Heart left ventricle (tissue), 16 donors: ENCODE measurements at regions of chr13 and their contacts with region 1.

Region 1: GRCh38 chr13:111066544-111066943 is 48.6 kb upstream of the ARHGEF7 start:
- DNase-seq: peak in 2 of 5 donors; percentile 49 to 61
- ATAC-seq: peak; percentile 37 to 68 (median 58)
- H3K4me3 ChIP-seq: peak overlapping the region in 8 of 12 donors; percentile 57 to 78 (median 67)
- H3K27ac ChIP-seq: peak overlapping the region in 8 of 12 donors; percentile 1 to 67 (median 64)
- H3K4me1 ChIP-seq: peaks cover 0 to 13% (median 0%) of the 10 kb centered on the region in 12 donors
- H3K27me3 ChIP-seq: peaks cover 0 to 28% (median 0%) of the 10 kb centered on the region in 9 donors
- CTCF ChIP-seq: no peak
- POLR2A ChIP-seq: no peak

Region 2: GRCh38 chr13:111114362-111115060 is 48.0 kb after region 1 on chr13:
- intact Hi-C with region 1: loop called in 1 of 10 experiments (anchors 5 kb)
- DNase-seq: peak; percentile 46 to 79 (median 61)
- ATAC-seq: peak in 3 of 4 donors; percentile 69 to 78 (median 70)
- H3K4me3 ChIP-seq: peak overlapping the region; percentile 39 to 78 (median 64)
- H3K27ac ChIP-seq: peak overlapping the region; percentile 20 to 88 (median 78)
- H3K4me1 ChIP-seq: peaks cover 0 to 22% (median 9%) of the 10 kb centered on the region in 12 donors
- H3K27me3 ChIP-seq: peaks cover 0 to 68% (median 5%) of the 10 kb centered on the region in 9 donors
- CTCF ChIP-seq: no peak
- POLR2A ChIP-seq: no peak

Region 3: DNA sequence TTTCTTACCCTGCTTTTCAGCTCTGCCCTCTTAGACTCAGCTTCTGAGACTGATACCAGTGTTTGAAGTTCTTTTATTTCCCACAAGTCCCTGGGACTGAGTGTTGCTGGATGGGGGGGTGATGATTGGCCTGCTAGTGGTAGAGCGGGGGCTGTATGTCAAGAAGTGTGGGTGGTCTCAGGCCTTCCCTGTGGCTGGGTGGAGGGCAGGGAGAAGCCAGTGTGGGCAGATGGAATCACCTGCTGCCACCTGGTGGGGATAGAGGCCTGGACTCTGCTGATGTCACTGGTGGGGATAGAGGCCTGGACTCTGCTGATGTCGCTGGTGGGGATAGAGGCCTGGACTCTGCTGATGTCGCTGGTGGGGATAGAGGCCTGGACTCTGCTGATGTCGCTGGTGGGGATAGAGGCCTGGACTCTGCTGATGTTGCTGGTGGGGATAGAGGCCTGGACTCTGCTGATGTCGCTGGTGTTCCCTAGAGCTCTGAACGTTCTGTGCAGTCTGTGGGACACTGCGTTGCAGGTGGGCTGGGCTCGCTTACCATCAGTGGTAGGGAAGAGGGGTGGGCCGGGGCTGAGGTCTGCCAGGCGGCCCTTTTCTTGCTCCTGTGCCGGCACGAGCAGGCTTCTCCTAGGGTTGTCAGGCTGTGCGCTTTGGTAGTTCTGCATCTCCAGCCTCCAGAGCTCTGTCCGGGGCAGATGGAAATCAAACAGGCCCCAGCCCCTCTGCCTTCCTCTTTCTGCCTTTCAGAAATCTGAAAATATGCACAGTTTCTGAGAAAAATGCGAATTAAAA is 149.8 kb after region 1 on chr13:
- intact Hi-C with region 1: loop called in 9 of 10 experiments (anchors 5 kb)
- DNase-seq: peak in 1 of 5 donors; percentile 37
- ATAC-seq: peak; percentile 40 to 61 (median 43)
- H3K4me3 ChIP-seq: no peak overlapping the region
- H3K27ac ChIP-seq: peak overlapping the region in 9 of 12 donors; percentile 8 to 65 (median 22)
- H3K4me1 ChIP-seq: peaks cover 0 to 92% (median 73%) of the 10 kb centered on the region in 12 donors
- H3K27me3 ChIP-seq: no peaks in the 10 kb centered on the region
- CTCF ChIP-seq: peak in 11 of 12 donors; percentile 19 to 57 (median 42)
- POLR2A ChIP-seq: no peak

Region 4: GRCh38 chr13:111281751-111282311 is 215.3 kb after region 1 on chr13:
- intact Hi-C with region 1: loop called in 1 of 10 experiments (anchors 10 kb)
- DNase-seq: peak in 2 of 5 donors; percentile 46 to 54
- ATAC-seq: peak; percentile 25 to 58 (median 41)
- H3K4me3 ChIP-seq: peak overlapping the region in 1 of 12 donors; percentile 9
- H3K27ac ChIP-seq: peak overlapping the region; percentile 43 to 83 (median 72)
- H3K4me1 ChIP-seq: peaks cover 11 to 57% (median 40%) of the 10 kb centered on the region in 12 donors
- H3K27me3 ChIP-seq: no peaks in the 10 kb centered on the region
- CTCF ChIP-seq: peak in 2 of 12 donors; percentile 22 to 26
- POLR2A ChIP-seq: no peak

Region 5: DNA sequence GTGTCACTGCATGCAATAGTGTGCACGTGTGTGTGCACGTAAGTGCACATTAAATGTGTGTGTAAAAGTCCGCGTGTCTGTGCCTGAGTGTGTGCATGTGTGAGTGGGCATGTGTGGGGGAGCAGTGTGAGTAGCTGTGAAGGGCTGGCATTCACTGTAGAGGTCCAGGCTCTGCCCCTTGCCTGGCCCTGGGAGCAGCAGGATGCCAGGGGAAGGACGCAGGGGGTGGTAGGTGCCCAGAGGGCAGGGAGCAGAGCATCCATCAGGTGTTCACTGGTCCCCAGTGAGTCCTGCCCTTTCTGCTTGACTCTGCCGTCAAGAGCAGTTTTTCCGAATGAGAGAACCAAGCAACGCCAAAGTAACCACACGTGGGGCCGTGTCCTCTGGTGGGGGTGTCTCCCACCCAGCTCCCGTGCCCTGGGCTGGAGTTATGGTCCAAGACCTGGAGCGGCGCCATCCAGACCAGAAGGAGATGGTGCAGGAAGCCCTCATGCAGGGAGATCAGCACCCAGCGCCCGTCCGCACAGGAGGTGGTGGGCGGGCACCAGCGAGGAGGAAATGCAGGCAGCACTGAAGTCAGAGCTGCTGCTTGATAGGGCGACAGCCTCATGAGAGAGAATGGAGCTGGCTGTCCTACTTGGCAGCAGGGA is 322.4 kb after region 1 on chr13:
- intact Hi-C with region 1: no loop called
- DNase-seq: peak in 2 of 5 donors; percentile 15 to 33
- ATAC-seq: no peak
- H3K4me3 ChIP-seq: no peak overlapping the region
- H3K27ac ChIP-seq: no peak overlapping the region
- H3K4me1 ChIP-seq: no peaks in the 10 kb centered on the region
- H3K27me3 ChIP-seq: peaks cover 0 to 24% (median 3%) of the 10 kb centered on the region in 9 donors
- CTCF ChIP-seq: no peak
- POLR2A ChIP-seq: no peak

Region 6: DNA sequence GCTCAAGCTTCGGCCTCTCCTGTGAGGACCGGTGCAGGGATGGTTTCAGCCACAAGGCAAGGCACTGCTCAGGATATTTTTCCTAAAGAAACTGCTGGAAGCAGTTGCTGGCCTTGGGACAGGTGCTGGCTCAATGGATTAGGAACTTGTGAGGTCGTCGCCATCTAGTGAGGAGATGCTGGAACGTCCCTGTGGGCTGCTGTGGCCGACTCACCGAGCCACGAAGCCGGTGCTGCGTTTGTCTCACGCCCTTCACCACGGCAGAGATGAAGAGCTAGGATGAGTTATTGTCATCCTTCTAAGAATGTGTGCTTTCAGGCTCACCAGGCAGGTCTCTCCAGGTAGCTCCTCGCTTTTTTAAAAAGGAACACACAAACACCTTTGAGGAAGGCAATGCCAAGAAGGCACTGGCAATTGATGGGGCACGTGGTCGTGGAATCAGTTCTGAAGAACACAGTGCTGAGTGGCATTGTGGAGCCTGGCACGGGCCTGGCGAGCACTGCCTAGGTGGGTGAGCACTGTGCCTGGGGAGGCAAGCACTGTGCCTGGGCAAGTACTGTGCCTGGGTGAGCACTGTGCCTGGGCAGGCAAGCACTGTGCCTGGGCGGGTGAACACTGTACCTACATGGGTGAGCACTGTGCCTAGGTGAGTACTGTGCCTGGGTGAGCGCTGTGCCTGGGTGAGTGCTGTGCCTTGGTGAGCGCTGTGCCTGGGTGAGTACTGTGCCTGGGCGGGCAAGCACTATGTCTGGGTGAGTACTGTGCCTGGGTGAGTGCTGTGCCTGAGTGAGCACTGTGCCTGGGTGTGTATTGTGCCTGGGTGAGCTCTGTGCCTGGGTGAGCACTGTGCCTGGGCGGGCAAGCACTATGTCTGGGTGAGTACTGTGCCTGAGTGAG is 394.3 kb after region 1 on chr13:
- intact Hi-C with region 1: loop called in 4 of 10 experiments (anchors 5 to 10 kb)
- DNase-seq: peak in 3 of 5 donors; percentile 22 to 65 (median 57)
- ATAC-seq: peak; percentile 71 to 83 (median 78)
- H3K4me3 ChIP-seq: no peak overlapping the region
- H3K27ac ChIP-seq: no peak overlapping the region
- H3K4me1 ChIP-seq: no peaks in the 10 kb centered on the region
- H3K27me3 ChIP-seq: peaks cover 0 to 35% (median 11%) of the 10 kb centered on the region in 9 donors
- CTCF ChIP-seq: peak; percentile 9 to 52 (median 42)
- POLR2A ChIP-seq: no peak